ENCODE measurements at regions of chr3 and their contacts with region 1.

Region 1: DNA sequence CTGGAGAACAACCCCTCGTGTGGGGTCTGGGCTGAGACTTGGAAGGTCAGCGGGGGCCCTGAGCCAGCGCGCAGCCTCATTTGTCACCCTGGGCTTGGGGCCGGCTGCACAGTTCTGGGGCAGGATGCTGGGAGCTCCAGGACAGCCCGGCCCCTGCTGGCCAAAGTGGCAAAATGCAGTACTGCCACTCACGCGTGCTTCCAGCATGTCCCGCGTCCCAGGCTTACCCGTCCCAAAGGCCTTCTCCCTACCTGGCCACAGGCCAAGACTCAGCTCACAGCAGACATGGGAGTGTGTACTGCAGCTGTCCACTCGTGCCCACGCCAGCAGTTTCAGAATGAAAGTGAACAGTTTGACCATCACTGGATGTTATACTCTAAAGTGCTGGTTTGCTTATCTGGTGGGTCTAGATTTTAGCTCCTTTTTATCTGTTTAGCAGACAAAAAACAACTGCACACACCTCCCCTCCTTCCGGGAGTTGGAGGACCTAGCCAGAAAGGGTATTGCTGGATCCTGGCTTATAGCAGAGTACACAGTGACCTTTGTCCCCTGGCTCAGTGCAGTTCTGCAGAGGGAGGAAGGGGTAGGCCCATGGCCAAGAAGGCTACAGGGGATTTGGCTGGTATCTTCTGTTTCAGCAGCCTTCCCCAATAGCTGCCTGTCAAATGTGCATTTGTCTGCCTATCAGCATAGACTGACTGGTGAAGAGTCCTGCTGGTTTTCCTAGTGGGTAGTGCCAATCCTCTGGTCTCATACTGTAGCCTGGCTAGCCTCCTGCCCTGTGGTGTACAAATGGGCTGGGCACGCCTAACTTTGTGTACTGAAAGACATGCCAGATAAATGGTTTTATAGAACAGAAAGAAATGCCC is 23.2 kb upstream of the IP6K2 start:
- DNase-seq: peak; percentile 9 to 66 (median 54)
- ATAC-seq: peak; percentile 86
- H3K4me3 ChIP-seq: no peak overlapping the region
- H3K4me3 Mint-ChIP-seq: no peak overlapping the region
- H3K27ac ChIP-seq: no peak overlapping the region
- H3K27ac Mint-ChIP-seq: no peak overlapping the region
- H3K4me1 ChIP-seq: peaks cover 3% of the 10 kb centered on the region
- H3K4me1 Mint-ChIP-seq: peaks cover 2% of the 10 kb centered on the region
- H3K27me3 ChIP-seq: no peaks in the 10 kb centered on the region
- H3K27me3 Mint-ChIP-seq: no peaks in the 10 kb centered on the region
- CTCF ChIP-seq: peak; percentile 60

Region 2: GRCh38 chr3:48507351-48508061 is 232.7 kb before region 1 on chr3:
- CTCF ChIA-PET with region 1: no interaction called
- POLR2A ChIA-PET with region 1: no interaction called
- intact Hi-C with region 1: no loop called
- DNase-seq: peak; percentile 53 to 88 (median 80)
- ATAC-seq: peak; percentile 87
- H3K4me3 ChIP-seq: no peak overlapping the region
- H3K4me3 Mint-ChIP-seq: peak overlapping the region; percentile 47
- H3K27ac ChIP-seq: peak overlapping the region in 1 of 2 experiments; percentile 25
- H3K27ac Mint-ChIP-seq: peak overlapping the region; percentile 72
- H3K4me1 ChIP-seq: peaks cover 36% of the 10 kb centered on the region
- H3K4me1 Mint-ChIP-seq: peaks cover 37% of the 10 kb centered on the region
- H3K27me3 ChIP-seq: no peaks in the 10 kb centered on the region
- H3K27me3 Mint-ChIP-seq: no peaks in the 10 kb centered on the region
- CTCF ChIP-seq: peak; percentile 72

Region 3: DNA sequence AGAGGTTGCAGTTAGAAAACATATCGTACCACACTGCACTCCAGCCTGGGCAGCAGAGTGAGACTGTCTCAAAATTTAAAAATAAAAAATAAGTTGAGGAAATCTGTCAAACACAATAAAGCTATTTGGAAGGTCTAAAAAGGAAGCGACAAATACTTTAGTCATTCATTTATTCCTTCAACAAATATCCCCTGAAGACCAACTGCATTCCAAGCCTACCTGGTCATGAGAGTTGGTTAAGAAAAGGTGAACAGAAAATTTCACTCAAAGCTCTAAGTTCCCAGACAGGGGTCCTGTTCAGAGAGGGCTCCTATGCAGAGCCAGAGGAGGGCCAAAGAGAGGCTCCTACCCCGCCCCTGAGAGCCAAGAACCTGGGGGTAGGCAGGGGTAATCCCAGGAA is 122.9 kb after region 1 on chr3:
- CTCF ChIA-PET with region 1: no interaction called
- POLR2A ChIA-PET with region 1: no interaction called
- intact Hi-C with region 1: loop called in 1 of 2 experiments (anchors 5 kb)
- DNase-seq: no peak
- ATAC-seq: no peak
- H3K4me3 ChIP-seq: no peak overlapping the region
- H3K4me3 Mint-ChIP-seq: no peak overlapping the region
- H3K27ac ChIP-seq: no peak overlapping the region
- H3K27ac Mint-ChIP-seq: no peak overlapping the region
- H3K4me1 ChIP-seq: no peaks in the 10 kb centered on the region
- H3K4me1 Mint-ChIP-seq: no peaks in the 10 kb centered on the region
- H3K27me3 ChIP-seq: no peaks in the 10 kb centered on the region
- H3K27me3 Mint-ChIP-seq: no peaks in the 10 kb centered on the region
- CTCF ChIP-seq: no peak

Region 4: DNA sequence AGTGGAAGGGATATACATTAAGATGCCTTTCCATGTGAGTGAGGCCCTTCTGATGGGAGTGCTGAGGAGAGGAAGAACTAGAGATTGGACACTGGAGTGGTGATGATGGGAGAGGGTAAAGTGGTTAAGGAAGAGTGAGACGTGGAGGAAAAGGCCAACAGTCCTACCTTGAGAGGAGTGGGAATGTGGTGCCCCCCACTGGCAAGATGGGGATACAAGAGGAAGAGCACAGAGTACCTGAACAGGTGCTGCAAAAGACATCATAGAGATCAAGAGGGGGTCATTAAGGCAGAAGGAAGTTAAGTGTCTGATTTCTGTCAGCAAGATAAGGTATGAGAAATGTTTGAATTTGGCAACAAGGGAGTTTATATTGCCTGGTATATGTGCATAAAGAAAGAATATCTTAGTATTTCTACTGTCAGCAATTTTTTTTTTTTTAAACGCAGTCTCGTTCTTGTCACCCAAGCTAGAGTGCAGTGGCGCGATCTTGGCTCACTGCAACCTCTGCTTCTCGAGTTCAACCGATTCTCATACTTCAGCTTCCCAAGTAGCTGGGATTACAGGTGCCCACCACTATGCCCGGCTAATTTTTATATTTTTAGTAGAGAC is 212.4 kb after region 1 on chr3:
- CTCF ChIA-PET with region 1: interaction called, 30 read pairs
- POLR2A ChIA-PET with region 1: no interaction called
- intact Hi-C with region 1: loop called (anchors 1 kb)
- DNase-seq: peak; percentile 22 to 75 (median 61)
- ATAC-seq: peak; percentile 84
- H3K4me3 ChIP-seq: no peak overlapping the region
- H3K4me3 Mint-ChIP-seq: no peak overlapping the region
- H3K27ac ChIP-seq: peak overlapping the region in 1 of 2 experiments; percentile 28
- H3K27ac Mint-ChIP-seq: peak overlapping the region; percentile 7
- H3K4me1 ChIP-seq: no peaks in the 10 kb centered on the region
- H3K4me1 Mint-ChIP-seq: peaks cover 22% of the 10 kb centered on the region
- H3K27me3 ChIP-seq: no peaks in the 10 kb centered on the region
- H3K27me3 Mint-ChIP-seq: no peaks in the 10 kb centered on the region
- CTCF ChIP-seq: peak; percentile 50